Right ventricle myocardium inferior (tissue), 1 donor: ENCODE measurements at regions of chr22 and their contacts with region 1.

Region 1: GRCh38 chr22:18077639-18078328 is at the start of gene PEX26:
- DNase-seq: peak; percentile 97
- ATAC-seq: peak; percentile 98
- total RNA-seq, gene PEX26: 19.4 TPM

Region 2: GRCh38 chr22:17742527-17742902 is 335.3 kb before region 1 on chr22:
- intact Hi-C with region 1: loop called (anchors 2 kb)
- DNase-seq: peak; percentile 74
- ATAC-seq: peak; percentile 63

Region 3: DNA sequence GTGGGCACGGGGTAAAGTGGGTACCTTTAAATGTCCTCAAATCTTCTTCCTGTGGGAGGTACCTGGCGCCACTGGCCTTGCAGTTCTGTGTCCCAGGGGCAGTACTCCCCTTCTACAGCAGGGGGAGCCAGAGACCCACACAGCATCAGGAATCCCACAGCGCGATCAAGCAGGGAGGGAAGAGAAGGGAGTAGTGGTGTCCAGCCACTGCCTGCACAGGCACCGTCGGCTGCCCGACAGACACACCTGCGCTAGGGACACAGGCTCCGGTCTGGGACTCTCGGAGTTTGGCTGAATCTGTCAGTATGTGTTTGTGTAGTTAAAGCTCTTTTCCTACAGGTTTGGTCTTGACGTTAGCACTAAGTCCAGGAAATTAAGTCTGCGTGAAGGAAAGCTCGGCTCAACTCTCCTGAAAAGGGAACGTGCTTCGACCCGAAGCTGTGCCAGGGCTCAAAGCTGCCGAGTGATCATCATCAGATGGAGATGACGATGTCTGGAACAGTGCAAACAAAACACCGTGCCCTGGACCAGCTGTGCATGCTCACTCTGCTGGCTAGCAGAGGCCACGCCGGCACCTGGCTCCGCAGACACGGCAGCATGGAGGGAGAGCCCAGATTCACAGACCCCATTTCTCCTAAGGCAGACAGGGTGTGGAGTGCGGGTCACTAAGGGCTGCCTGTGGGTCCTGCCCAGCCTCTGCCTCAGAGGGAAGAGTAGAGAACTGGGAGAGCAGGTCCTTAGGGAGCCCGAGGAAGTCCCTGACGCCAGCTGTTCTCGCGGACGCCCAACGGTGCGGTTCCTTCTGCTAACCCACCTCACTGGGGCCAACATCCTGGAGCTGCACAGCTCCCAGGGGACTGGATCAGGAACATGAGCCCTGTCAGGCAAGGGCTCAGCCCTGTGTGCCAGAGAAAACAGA is 247.5 kb before region 1 on chr22:
- intact Hi-C with region 1: loop called (anchors 1 kb)
- DNase-seq: peak; percentile 89
- ATAC-seq: peak; percentile 79

Region 4: GRCh38 chr22:17910561-17911311 is 167.0 kb before region 1 on chr22:
- intact Hi-C with region 1: loop called (anchors 5 kb)
- DNase-seq: peak; percentile 82
- ATAC-seq: peak; percentile 87

Region 5: GRCh38 chr22:18000423-18001039 is 77.3 kb before region 1 on chr22:
- intact Hi-C with region 1: no loop called
- DNase-seq: no peak
- ATAC-seq: no peak

Region 6: GRCh38 chr22:18024276-18024947 is 53.4 kb before region 1 on chr22 and contains the start of gene MICAL3:
- intact Hi-C with region 1: loop called (anchors 2 kb)
- DNase-seq: no peak
- ATAC-seq: peak; percentile 84
- total RNA-seq, gene MICAL3: 85.7 TPM